ENCODE measurements at regions of chr6 and their contacts with region 1.

Region 1: GRCh38 chr6:36615018-36615761 is 21.0 kb downstream of the SRSF3 start:
- DNase-seq: peak; percentile 85
- H3K4me3 ChIP-seq: no peak overlapping the region
- H3K27ac ChIP-seq: no peak overlapping the region
- H3K4me1 ChIP-seq: peaks cover 17% of the 10 kb centered on the region
- H3K27me3 ChIP-seq: no peaks in the 10 kb centered on the region
- CTCF ChIP-seq: peak; percentile 65 to 74
- POLR2A ChIP-seq: no peak

Region 2: DNA sequence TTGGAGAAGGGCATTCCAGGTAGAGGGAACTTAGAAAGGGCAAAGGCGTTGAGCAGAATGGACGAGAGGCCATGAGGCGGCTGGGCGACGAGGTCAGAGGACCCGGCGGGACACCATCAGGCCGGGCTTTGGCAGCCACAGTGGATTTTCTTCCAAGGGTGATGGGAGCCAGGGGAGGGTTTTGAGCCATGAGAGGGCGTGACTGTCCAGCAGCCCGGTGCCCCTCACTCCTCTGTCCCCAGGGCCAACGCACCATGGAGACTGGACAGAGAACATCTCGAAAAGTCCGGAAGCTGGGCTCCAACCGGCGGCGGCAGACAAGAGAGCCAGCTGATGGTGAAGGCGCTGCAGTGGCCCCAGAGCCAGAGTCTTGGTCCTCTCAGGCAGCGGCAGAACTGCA is 88.8 kb after region 1 on chr6:
- CTCF ChIA-PET with region 1: interaction called, 17 read pairs
- POLR2A ChIA-PET with region 1: no interaction called
- dilution Hi-C with region 1: no loop called
- intact Hi-C with region 1: no loop called
- DNase-seq: no peak
- H3K4me3 ChIP-seq: no peak overlapping the region
- H3K27ac ChIP-seq: no peak overlapping the region
- H3K4me1 ChIP-seq: no peaks in the 10 kb centered on the region
- H3K27me3 ChIP-seq: no peaks in the 10 kb centered on the region
- CTCF ChIP-seq: no peak
- POLR2A ChIP-seq: no peak